PC-3 (cell line): ENCODE measurements at regions of chr7 and their contacts with region 1.

Region 1: DNA sequence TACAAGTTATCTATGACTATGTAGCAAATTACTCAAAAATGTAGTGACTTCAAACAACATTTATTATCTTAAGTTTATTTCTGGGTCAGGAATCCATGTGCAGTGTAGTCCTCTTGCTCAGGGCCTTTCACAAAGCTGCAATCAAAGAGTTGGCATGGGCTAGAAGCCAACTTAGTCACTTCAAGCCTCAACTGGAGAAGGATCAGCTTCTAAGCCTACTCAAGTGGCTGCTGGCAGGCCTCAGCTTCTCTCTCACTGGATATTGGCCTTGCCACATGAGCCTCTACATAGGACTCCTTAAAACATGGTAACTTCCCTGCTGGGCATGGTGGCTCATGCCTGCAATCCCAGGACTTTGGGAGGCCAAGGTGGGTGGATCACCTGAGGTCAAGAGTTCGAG is 5.0 kb upstream of the NFE2L3 start:
- DNase-seq: no peak
- ATAC-seq: no peak
- H3K4me3 ChIP-seq: no peak overlapping the region
- H3K27ac ChIP-seq: no peak overlapping the region
- H3K4me1 ChIP-seq: peaks cover 15% of the 10 kb centered on the region
- H3K27me3 ChIP-seq: no peaks in the 10 kb centered on the region
- CTCF ChIP-seq: no peak

Region 2: GRCh38 chr7:25619963-25620799 is 526.8 kb before region 1 on chr7:
- CTCF ChIA-PET with region 1: no interaction called
- POLR2A ChIA-PET with region 1: no interaction called
- intact Hi-C with region 1: no loop called
- DNase-seq: no peak
- ATAC-seq: no peak
- H3K4me3 ChIP-seq: no peak overlapping the region
- H3K27ac ChIP-seq: no peak overlapping the region
- H3K4me1 ChIP-seq: no peaks in the 10 kb centered on the region
- H3K27me3 ChIP-seq: peaks cover 3% of the 10 kb centered on the region; the same call in 1 of the 2 replicates
- CTCF ChIP-seq: no peak

Region 3: GRCh38 chr7:26388256-26388655 is 241.2 kb after region 1 on chr7:
- CTCF ChIA-PET with region 1: no interaction called
- POLR2A ChIA-PET with region 1: no interaction called
- intact Hi-C with region 1: no loop called
- DNase-seq: no peak
- ATAC-seq: no peak
- H3K4me3 ChIP-seq: no peak overlapping the region
- H3K27ac ChIP-seq: no peak overlapping the region
- H3K4me1 ChIP-seq: no peaks in the 10 kb centered on the region
- H3K27me3 ChIP-seq: no peaks in the 10 kb centered on the region
- CTCF ChIP-seq: no peak

Region 4: GRCh38 chr7:26476271-26476670 is 329.2 kb after region 1 on chr7:
- CTCF ChIA-PET with region 1: interaction called, 10 read pairs
- POLR2A ChIA-PET with region 1: no interaction called
- intact Hi-C with region 1: no loop called
- DNase-seq: no peak
- ATAC-seq: no peak
- H3K4me3 ChIP-seq: no peak overlapping the region
- H3K27ac ChIP-seq: no peak overlapping the region
- H3K4me1 ChIP-seq: no peaks in the 10 kb centered on the region
- H3K27me3 ChIP-seq: no peaks in the 10 kb centered on the region
- CTCF ChIP-seq: no peak

Region 5: DNA sequence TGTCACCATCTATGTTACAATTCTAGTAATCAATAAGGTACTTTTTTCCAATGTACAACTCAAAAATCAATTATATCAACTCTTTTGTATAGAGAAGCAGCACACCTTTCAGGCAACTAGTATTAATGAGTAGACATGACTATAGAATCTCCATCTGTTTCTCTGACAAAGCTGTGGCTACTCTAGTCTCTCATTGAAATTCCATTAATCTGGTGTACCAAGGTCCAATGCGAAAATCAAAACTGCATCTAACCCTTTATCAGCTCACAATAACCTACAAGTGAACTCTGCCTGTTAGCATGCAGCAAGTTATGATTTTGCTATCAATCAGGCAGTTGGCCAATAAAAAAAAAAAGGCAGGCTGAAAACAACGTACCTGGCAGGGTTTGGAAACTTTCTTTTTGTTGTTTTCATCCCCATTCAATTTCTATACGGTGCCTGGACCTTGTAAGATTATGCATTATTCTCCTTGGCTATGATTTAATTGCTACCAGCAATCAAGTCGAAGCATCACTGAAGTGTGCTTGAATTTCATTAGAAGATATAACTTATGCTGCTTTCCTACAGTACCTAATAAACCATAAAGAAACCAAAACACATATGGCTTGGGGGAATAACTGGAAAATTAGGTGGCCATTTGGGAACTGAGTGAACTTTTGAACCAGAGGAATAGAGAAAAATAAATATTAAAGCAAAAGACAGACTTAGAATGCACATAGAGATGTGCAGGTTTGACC is 694.1 kb after region 1 on chr7:
- CTCF ChIA-PET with region 1: no interaction called
- POLR2A ChIA-PET with region 1: no interaction called
- intact Hi-C with region 1: no loop called
- DNase-seq: no peak
- ATAC-seq: no peak
- H3K4me3 ChIP-seq: no peak overlapping the region
- H3K27ac ChIP-seq: no peak overlapping the region
- H3K4me1 ChIP-seq: no peaks in the 10 kb centered on the region
- H3K27me3 ChIP-seq: no peaks in the 10 kb centered on the region
- CTCF ChIP-seq: no peak